IMR-90 (cell line): ENCODE measurements at regions of chr3 and their contacts with region 1.

Region 1: GRCh38 chr3:168865022-168865551 is 769.4 kb upstream of the GOLIM4 start:
- DNase-seq: peak; percentile 48
- ATAC-seq: peak; percentile 44; the same call in 1 of the 2 replicates
- H3K4me3 ChIP-seq: no peak overlapping the region
- H3K27ac ChIP-seq: no peak overlapping the region
- H3K4me1 ChIP-seq: no peaks in the 10 kb centered on the region
- H3K27me3 ChIP-seq: no peaks in the 10 kb centered on the region
- CTCF ChIP-seq: peak; percentile 76
- POLR2A ChIP-seq: no peak
- RAD21 ChIP-seq: peak; percentile 66

Region 2: GRCh38 chr3:168876346-168877035 is 11.4 kb after region 1 on chr3:
- CTCF ChIA-PET with region 1: interaction called, 12 read pairs
- POLR2A ChIA-PET with region 1: no interaction called
- dilution Hi-C with region 1: no loop called
- in situ Hi-C with region 1: no loop called
- intact Hi-C with region 1: no loop called
- DNase-seq: no peak
- ATAC-seq: no peak
- H3K4me3 ChIP-seq: no peak overlapping the region
- H3K27ac ChIP-seq: no peak overlapping the region
- H3K4me1 ChIP-seq: no peaks in the 10 kb centered on the region
- H3K27me3 ChIP-seq: no peaks in the 10 kb centered on the region
- CTCF ChIP-seq: no peak
- POLR2A ChIP-seq: no peak
- RAD21 ChIP-seq: no peak

Region 3: GRCh38 chr3:169676925-169677537 is 811.9 kb after region 1 on chr3:
- CTCF ChIA-PET with region 1: no interaction called
- POLR2A ChIA-PET with region 1: no interaction called
- dilution Hi-C with region 1: no loop called
- in situ Hi-C with region 1: loop called (anchors 10 kb)
- intact Hi-C with region 1: no loop called
- DNase-seq: no peak
- ATAC-seq: no peak
- H3K4me3 ChIP-seq: no peak overlapping the region
- H3K27ac ChIP-seq: no peak overlapping the region
- H3K4me1 ChIP-seq: no peaks in the 10 kb centered on the region
- H3K27me3 ChIP-seq: peaks cover 2% of the 10 kb centered on the region; the same call in 1 of the 2 replicates
- CTCF ChIP-seq: no peak
- POLR2A ChIP-seq: no peak
- RAD21 ChIP-seq: no peak

Region 4: GRCh38 chr3:169744366-169745054 is 879.4 kb after region 1 on chr3:
- CTCF ChIA-PET with region 1: no interaction called
- POLR2A ChIA-PET with region 1: no interaction called
- dilution Hi-C with region 1: no loop called
- in situ Hi-C with region 1: no loop called
- intact Hi-C with region 1: loop called (anchors 2 kb)
- DNase-seq: peak; percentile 22
- ATAC-seq: 0 out of 2 replicates have a peak, but pooled peaks have one; percentile 24
- H3K4me3 ChIP-seq: no peak overlapping the region
- H3K27ac ChIP-seq: no peak overlapping the region
- H3K4me1 ChIP-seq: no peaks in the 10 kb centered on the region
- H3K27me3 ChIP-seq: peaks cover 5% of the 10 kb centered on the region
- CTCF ChIP-seq: peak; percentile 55
- POLR2A ChIP-seq: no peak
- RAD21 ChIP-seq: peak; percentile 64